Naive thymus-derived CD8-positive, alpha-beta T cell (primary cell): ENCODE measurements at regions of chr6 and their contacts with region 1.

Region 1: DNA sequence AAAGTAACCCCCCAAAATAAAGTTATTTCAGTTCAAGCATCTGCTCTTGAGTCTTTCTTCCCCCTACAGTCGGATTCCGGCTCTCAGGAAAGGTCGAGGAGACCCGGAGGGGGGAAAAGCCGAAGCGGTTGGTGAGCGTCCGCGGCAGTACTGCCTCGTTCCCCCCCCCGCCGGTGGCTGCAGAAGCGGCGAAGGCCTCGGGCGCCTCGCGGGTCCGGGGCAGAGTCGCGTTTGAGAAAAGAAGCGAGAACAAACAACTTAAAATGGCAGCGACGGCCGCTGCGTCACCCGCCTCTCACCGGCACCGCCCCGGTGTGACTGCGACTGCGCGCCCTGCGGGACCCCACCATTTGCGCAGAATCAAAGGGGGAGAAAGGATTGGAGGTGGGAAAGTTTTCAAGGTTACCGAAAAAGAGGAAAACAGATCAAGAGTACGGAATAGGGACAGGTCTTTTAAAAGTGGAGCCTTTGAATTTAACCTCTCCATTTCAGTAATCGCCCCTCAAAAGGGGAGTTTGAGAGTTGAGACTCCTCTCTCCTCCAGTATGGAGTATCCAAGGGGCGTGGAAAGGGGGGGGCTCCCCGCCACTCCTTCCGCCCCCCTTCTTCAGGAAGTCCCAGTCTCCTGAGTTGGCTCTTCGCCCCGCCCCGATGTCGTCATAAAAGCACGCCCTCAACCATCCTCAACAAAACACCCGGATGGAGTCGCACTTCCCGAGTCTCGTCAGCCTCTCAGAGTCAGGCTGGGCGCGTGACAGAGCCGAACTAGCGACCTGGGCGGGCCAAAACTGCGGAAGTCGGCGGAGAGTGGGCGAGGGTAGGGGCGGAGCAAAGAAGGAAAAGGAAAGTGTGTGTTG is 1.9 kb upstream of the C6orf62 start:
- DNase-seq: peak; percentile 95 to 100 (median 100)
- ATAC-seq: peak; percentile 85 to 87
- H3K4me3 Mint-ChIP-seq: peak overlapping the region; percentile 90 to 100 (median 96)
- H3K27ac Mint-ChIP-seq: peak overlapping the region; percentile 96 to 100 (median 99)
- H3K4me1 Mint-ChIP-seq: peaks cover 20 to 50% (median 39%) of the 10 kb centered on the region in 4 donors
- H3K27me3 Mint-ChIP-seq: no peaks in the 10 kb centered on the region

Region 2: GRCh38 chr6:24752917-24753490 is 32.2 kb after region 1 on chr6:
- POLR2A ChIA-PET with region 1: no interaction called
- DNase-seq: no peak
- ATAC-seq: no peak
- H3K4me3 Mint-ChIP-seq: no peak overlapping the region
- H3K27ac Mint-ChIP-seq: peak overlapping the region in 1 of 10 donors; percentile 50
- H3K4me1 Mint-ChIP-seq: peaks cover 0 to 6% (median under 1%) of the 10 kb centered on the region in 4 donors
- H3K27me3 Mint-ChIP-seq: peaks cover 0 to 9% (median 2%) of the 10 kb centered on the region in 5 donors

Region 3: DNA sequence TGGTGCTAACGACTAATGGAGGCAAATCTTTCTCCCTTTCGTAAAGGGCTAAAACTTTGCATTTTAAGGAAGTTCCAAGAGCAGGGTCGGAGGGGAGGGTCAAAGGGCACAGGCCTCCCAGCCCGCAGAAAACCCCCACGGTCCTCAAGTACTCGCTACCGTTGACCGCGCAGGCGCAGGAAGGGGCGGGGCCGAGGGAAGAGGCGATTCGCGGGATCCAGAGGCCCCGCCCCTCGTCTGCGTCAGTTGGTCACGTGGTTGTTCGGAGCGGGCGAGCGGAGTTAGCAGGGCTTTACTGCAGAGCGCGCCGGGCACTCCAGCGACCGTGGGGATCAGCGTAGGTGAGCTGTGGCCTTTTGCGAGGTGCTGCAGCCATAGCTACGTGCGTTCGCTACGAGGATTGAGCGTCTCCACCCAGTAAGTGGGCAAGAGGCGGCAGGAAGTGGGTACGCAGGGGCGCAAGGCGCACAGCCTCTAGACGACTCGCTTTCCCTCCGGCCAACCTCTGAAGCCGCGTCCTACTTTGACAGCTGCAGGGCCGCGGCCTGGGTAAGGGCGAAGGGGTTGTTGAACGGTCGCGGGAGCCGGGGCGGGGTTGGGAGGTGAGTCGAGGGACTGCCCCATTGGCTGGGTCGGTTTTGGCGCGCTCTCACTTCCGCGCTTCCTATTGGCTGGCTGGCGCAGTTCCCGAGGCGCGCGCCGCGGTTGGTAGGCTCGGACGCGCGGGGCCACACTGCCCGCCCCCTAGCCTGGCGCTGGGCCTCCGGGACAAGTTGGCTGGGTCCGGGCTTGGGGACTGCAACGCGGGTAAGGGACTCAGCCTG is 54.1 kb after region 1 on chr6 and contains the start of gene GMNN:
- POLR2A ChIA-PET with region 1: interaction called, 15 read pairs
- DNase-seq: peak; percentile 93 to 99 (median 96)
- ATAC-seq: peak; percentile 92 to 93
- H3K4me3 Mint-ChIP-seq: peak within 1 kb of the TSS; percentile 96 to 100 (median 98)
- H3K27ac Mint-ChIP-seq: peak within 1 kb of the TSS; percentile 87 to 99 (median 98)
- H3K4me1 Mint-ChIP-seq: peaks cover 7 to 31% (median 17%) of the 10 kb centered on the region in 4 donors
- H3K27me3 Mint-ChIP-seq: no peaks in the 10 kb centered on the region
- polyA plus RNA-seq, gene GMNN: 4.0 to 5.3 (median 4.3) TPM